Mucosa of descending colon (tissue), 3 donors: ENCODE measurements at regions of chr13 and their contacts with region 1.

Region 1: GRCh38 chr13:70568571-70568970 is 460.3 kb upstream of the KLHL1 start:
- DNase-seq: peak in 1 of 3 donors; percentile 44
- ATAC-seq: peak; percentile 38
- H3K4me3 ChIP-seq: no peak overlapping the region
- H3K4me1 ChIP-seq: no peaks in the 10 kb centered on the region
- CTCF ChIP-seq: no peak

Region 2: DNA sequence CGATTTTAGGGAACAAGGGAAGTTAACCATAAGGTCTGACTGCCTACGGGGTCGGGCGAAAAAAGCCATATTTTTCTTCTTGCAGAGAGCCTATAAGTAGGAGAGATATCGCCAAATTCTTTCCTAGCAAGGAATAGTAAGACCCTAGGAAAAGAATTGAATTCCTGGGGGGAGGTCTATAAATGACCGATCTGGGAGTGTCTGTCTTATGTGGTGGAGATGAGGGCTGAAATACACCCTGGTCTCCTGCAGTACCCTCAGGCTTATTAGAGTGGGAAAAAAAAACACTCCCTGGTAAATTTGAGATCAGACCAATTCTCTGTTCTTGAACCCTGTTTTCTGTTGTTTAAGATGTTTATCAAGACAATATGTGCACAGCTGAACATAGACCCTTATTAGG is 908.4 kb before region 1 on chr13:
- intact Hi-C with region 1: no loop called
- DNase-seq: no peak
- ATAC-seq: no peak
- H3K4me3 ChIP-seq: no peak overlapping the region
- H3K4me1 ChIP-seq: no peaks in the 10 kb centered on the region
- CTCF ChIP-seq: no peak

Region 3: DNA sequence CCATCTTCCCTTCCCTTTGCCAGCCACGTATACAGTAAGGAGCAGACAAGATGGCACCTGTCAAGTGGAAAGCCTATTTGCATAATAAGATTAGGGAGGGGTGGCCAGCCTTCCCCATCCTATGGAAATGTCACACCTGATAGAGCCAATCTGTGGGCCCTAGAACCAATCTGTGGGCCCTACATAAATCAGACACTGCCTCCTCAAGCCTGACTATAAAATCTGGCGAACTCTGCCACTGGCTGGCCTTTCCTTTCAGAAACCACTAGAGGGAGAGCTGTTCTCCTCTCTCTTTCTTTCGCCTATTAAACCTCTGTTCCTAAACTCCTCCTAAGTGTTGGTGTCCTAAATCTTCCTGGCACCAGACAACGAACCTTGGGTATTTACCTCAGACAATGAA is 228.8 kb before region 1 on chr13:
- intact Hi-C with region 1: loop called in 1 of 2 experiments (anchors 2 kb)
- DNase-seq: peak in 2 of 3 donors; percentile 27 to 35
- ATAC-seq: peak; percentile 78
- H3K4me3 ChIP-seq: no peak overlapping the region
- H3K4me1 ChIP-seq: no peaks in the 10 kb centered on the region
- CTCF ChIP-seq: peak; percentile 11

Region 4: GRCh38 chr13:70630247-70630646 is 61.7 kb after region 1 on chr13:
- intact Hi-C with region 1: no loop called
- DNase-seq: no peak
- ATAC-seq: no peak
- H3K4me3 ChIP-seq: no peak overlapping the region
- H3K4me1 ChIP-seq: no peaks in the 10 kb centered on the region
- CTCF ChIP-seq: no peak

Region 5: DNA sequence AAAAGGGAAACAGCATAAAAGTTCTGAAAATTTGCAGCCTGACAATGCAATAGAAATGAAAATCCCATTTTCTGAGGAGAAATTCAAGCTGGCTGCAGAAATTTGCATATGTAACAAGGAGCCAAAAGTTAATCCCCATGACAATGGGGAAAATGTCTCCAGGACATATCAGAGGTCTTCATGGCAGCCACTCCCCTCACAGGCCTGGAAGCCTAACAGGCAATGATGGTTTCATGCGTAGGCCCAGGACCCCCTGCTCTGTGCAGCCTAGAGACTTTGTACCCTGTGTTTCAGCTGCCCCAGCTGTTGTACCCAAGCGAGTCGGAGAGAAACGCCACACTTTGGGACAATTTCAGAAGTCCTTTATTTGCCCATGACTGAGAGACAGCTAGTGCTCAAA is 241.0 kb after region 1 on chr13:
- intact Hi-C with region 1: no loop called
- DNase-seq: no peak
- ATAC-seq: no peak
- H3K4me3 ChIP-seq: no peak overlapping the region
- H3K4me1 ChIP-seq: no peaks in the 10 kb centered on the region
- CTCF ChIP-seq: no peak

Region 6: GRCh38 chr13:71213252-71213821 is 644.8 kb after region 1 on chr13:
- intact Hi-C with region 1: no loop called
- DNase-seq: no peak
- ATAC-seq: no peak
- H3K4me3 ChIP-seq: no peak overlapping the region
- H3K4me1 ChIP-seq: no peaks in the 10 kb centered on the region
- CTCF ChIP-seq: no peak